IMR-90 (cell line): ENCODE measurements at regions of chr7 and their contacts with region 1.

Region 1: GRCh38 chr7:157138424-157139110 is at the start of gene UBE3C:
- DNase-seq: peak; percentile 90
- ATAC-seq: peak; percentile 89
- H3K4me3 ChIP-seq: peak within 1 kb of the TSS; percentile 59
- H3K27ac ChIP-seq: peak within 1 kb of the TSS; percentile 89
- H3K4me1 ChIP-seq: peaks cover 11% of the 10 kb centered on the region
- H3K27me3 ChIP-seq: no peaks in the 10 kb centered on the region
- CTCF ChIP-seq: no peak
- POLR2A ChIP-seq: peak; percentile 70
- RAD21 ChIP-seq: no peak
- total RNA-seq, gene UBE3C: 60.6 and 88.6 TPM in 2 replicates

Region 2: GRCh38 chr7:156640257-156640948 is 498.2 kb before region 1 on chr7 and contains the start of gene RNF32:
- CTCF ChIA-PET with region 1: no interaction called
- POLR2A ChIA-PET with region 1: no interaction called
- dilution Hi-C with region 1: no loop called
- in situ Hi-C with region 1: loop called (anchors 25 kb)
- intact Hi-C with region 1: no loop called
- DNase-seq: peak; percentile 86
- ATAC-seq: peak; percentile 96
- H3K4me3 ChIP-seq: peak within 1 kb of the TSS; percentile 85
- H3K27ac ChIP-seq: peak within 1 kb of the TSS; percentile 72
- H3K4me1 ChIP-seq: peaks cover 2% of the 10 kb centered on the region; the same call in 1 of the 2 replicates
- H3K27me3 ChIP-seq: no peaks in the 10 kb centered on the region
- CTCF ChIP-seq: no peak
- POLR2A ChIP-seq: peak; percentile 63; the same call in 1 of the 2 replicates
- RAD21 ChIP-seq: no peak
- total RNA-seq, gene RNF32: 0.36 and 0.56 TPM in 2 replicates

Region 3: DNA sequence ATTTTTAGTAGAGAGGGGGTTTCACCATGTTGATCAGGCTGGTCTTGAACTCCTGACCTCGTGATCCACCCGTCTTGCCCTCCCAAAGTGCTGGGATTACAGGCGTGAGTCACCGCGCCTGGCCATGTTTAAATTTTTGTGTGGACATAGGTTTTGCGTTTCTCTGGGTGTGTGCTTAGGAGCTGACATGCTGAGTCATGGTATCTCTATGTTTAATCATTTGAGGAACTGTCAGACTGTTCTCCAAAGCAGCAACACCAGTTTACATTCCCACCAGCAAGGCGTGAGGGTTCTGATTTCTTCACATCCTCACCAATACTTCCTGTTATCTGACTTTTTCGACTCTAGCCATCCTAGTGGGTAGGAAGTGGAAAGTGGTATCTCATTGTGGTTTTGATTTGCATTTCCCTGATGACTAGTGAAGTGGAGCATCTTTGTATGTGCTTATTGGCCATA is 351.9 kb after region 1 on chr7:
- CTCF ChIA-PET with region 1: no interaction called
- POLR2A ChIA-PET with region 1: no interaction called
- dilution Hi-C with region 1: no loop called
- in situ Hi-C with region 1: no loop called
- intact Hi-C with region 1: no loop called
- DNase-seq: peak; percentile 19
- ATAC-seq: no peak
- H3K4me3 ChIP-seq: no peak overlapping the region
- H3K27ac ChIP-seq: no peak overlapping the region
- H3K4me1 ChIP-seq: no peaks in the 10 kb centered on the region
- H3K27me3 ChIP-seq: no peaks in the 10 kb centered on the region
- CTCF ChIP-seq: no peak
- POLR2A ChIP-seq: no peak
- RAD21 ChIP-seq: no peak

Region 4: DNA sequence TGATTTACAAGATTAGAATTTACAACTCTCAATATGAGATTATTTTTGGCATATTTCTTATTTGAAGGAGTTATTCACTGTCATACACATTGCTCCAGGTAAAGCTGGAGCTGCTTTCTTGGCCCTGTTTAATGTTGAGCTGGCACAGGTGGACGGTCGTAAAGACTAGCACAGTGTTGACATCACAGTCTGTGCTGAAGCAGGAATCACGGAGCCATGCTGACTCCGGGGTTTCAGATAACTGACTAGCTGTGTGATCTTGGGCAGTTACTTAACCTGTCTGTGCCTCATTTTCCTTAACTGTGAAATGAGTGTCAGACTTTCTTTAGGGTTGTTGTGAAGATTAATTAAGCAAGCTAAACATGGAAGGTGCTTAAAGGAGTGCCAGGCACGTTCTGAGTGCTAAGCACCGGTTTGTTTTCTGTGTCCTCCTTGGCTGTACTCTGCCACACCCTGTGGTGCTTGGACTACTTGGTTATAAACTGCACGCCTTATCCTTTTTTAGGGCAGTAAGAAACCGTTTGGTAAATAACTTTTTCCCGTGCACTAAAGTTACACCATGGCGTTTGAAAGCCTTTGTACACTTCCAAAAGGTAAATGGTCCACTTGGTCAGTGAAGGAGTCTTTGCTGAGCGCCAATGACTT is 1765.5 kb after region 1 on chr7:
- CTCF ChIA-PET with region 1: no interaction called
- POLR2A ChIA-PET with region 1: interaction called, 11 read pairs
- dilution Hi-C with region 1: no loop called
- in situ Hi-C with region 1: no loop called
- intact Hi-C with region 1: no loop called
- DNase-seq: no peak
- ATAC-seq: no peak
- H3K4me3 ChIP-seq: no peak overlapping the region
- H3K27ac ChIP-seq: no peak overlapping the region
- H3K4me1 ChIP-seq: no peaks in the 10 kb centered on the region
- H3K27me3 ChIP-seq: no peaks in the 10 kb centered on the region
- CTCF ChIP-seq: no peak
- POLR2A ChIP-seq: no peak
- RAD21 ChIP-seq: no peak